Posterior cingulate gyrus (tissue), 11 donors: ENCODE measurements at regions of chr9 and their contacts with region 1.

Region 1: DNA sequence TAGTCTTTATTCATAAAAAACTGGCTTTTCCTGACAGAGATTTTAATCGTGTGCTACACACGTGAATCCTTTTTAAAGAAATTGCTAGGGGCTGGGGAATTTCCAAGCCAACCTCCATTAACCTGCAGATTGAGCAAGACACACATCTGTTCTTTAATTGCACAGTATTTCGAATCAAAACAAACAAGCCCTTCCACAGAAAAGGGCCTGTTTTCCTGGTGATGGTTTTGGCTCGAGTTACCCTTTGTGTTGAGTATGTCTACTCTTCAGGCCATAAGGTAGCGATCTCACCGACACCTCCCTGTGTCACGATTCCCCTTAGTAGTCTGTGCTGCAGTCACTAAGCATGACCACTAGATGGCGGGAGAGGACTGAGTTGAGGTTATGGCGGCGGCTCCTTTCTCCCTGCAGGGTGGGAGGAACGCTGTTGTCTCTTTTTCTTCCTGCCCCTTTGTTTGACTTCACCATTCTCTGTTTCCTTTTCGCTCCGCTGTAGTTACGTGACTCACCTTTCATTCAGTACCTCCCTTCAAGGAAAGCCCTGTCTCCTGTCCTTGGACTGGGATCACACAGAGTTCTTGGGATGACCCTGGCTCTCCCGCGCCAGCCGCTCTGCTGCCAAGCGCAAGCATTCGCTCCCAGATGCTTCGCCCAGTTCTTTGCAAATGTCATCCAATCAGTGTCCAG is 137.1 kb upstream of the SLC24A2 start:
- DNase-seq: peak; percentile 48 to 96 (median 76)

Region 2: DNA sequence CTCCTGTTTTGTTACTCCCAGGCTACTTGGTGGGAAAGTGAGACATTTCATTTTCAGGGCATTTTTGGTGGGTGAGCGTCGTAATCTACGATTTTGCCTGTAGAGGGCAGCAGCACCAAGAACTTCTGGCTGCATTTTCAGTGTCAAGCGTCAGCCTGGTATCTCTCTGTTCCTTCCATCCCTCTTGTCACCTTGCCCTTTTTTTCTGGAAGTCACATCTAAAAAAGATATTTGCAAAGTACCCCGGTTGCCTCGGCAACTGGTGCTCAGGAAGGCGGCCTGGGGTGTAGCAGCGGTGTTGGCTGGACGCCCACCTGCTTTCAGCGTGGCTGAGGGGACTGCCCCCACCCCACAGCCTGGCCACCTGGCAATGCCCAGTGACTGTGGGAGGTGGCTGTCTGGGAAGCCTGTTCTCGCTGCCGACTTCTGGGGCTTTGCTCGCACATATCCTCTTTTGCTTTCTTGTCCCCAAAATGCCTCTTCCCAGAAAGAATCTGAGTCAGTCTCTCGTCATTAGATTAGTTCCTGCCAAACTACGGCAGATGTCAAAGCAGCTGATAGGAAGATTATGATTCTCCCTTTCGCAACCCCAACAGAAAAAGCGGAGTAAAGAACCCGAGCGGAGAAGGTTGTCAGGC is 432.7 kb before region 1 on chr9:
- intact Hi-C with region 1: loop called (anchors 1 kb)
- DNase-seq: peak; percentile 63 to 97 (median 74)

Region 3: GRCh38 chr9:20340511-20340861 is 414.5 kb after region 1 on chr9:
- intact Hi-C with region 1: loop called (anchors 10 kb)
- DNase-seq: no peak

Region 4: GRCh38 chr9:20941174-20941690 is 1015.3 kb after region 1 on chr9:
- intact Hi-C with region 1: loop called (anchors 1 kb)
- DNase-seq: peak in 7 of 10 donors; percentile 21 to 88 (median 54)